ENCODE measurements at regions of chr2 and their contacts with region 1.

Region 1: DNA sequence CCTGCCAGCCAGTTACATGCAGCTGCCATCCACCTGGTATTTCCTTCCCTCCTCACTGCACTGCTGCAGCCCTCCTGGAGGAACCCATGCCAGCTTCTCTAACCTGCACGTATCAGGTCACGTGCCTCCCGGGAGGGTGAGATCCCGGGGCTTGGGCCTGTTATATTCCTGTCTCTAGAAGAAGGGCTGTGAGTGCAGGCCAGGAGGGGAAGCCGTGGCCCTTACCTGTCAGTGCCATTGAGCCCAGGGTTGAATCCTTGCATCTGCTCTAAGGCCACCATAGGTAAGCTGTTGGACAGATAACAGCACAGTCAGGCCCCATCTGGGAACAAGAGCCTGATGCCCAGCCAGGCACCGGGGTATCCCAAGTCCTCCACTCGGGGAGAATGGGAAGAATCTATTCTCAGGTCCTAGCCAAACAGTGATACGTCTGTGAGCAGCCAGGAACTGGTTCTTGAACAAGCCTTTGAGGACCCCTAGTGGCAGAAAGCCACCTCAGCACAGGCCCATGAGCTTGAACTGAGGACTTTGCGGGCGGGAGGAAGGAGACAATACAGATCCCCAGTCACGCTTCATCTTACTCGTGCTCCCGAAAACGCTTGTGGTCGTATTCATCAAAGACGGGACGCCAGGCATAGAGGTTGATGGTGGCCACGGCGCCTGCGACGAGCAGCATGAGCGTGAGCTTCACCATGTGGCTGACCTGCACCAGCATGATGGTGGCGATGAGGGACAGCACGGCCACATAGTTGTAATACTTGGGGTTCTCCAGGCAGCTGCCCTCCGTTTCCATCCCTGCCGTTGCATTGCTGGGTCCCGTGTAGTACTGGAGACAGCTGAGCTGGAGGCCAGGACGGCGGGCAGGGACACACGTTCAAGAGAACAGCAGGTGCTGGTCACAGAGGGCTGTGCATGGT is 34.4 kb downstream of the CENPO start:
- DNase-seq: peak; percentile 94
- H3K4me3 ChIP-seq: peak overlapping the region in 1 of 2 experiments; percentile 22; a peak in 1 of 4 replicates
- H3K27ac ChIP-seq: no peak overlapping the region
- H3K4me1 ChIP-seq: peaks cover 7 to 11% of the 10 kb centered on the region in 2 experiments; a peak in 1 of 4 replicates
- H3K27me3 ChIP-seq: no peaks in the 10 kb centered on the region
- CTCF ChIP-seq: peak; percentile 98
- EP300 ChIP-seq: no peak
- RAD21 ChIP-seq: peak; percentile 99

Region 2: DNA sequence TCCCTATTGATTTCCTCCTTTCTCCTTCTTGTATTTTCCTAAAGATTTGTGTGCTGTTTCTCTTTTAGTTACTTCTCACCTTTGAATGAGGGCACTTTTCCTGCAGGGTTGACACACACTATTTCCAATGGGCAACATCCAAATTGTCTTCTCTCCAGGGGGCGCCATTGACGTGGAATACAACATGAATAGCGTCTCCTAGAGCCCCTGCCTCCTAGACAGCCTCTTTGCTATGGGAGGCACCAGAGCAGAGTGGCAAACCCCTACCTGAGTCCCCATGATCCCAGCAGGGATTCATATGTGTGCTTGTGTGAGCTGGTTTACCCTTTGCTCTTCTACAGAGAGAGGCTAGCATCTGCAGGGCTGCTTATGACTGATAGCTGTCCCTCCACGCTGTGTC is 405.9 kb before region 1 on chr2:
- CTCF ChIA-PET with region 1: interaction called, 123 read pairs
- POLR2A ChIA-PET with region 1: no interaction called
- DNase-seq: peak; percentile 60
- H3K4me3 ChIP-seq: no peak overlapping the region
- H3K27ac ChIP-seq: no peak overlapping the region
- H3K4me1 ChIP-seq: peaks cover 0 to 2% of the 10 kb centered on the region in 2 experiments; a peak in 1 of 4 replicates
- H3K27me3 ChIP-seq: no peaks in the 10 kb centered on the region
- CTCF ChIP-seq: peak; percentile 58
- EP300 ChIP-seq: no peak
- RAD21 ChIP-seq: peak; percentile 88

Region 3: DNA sequence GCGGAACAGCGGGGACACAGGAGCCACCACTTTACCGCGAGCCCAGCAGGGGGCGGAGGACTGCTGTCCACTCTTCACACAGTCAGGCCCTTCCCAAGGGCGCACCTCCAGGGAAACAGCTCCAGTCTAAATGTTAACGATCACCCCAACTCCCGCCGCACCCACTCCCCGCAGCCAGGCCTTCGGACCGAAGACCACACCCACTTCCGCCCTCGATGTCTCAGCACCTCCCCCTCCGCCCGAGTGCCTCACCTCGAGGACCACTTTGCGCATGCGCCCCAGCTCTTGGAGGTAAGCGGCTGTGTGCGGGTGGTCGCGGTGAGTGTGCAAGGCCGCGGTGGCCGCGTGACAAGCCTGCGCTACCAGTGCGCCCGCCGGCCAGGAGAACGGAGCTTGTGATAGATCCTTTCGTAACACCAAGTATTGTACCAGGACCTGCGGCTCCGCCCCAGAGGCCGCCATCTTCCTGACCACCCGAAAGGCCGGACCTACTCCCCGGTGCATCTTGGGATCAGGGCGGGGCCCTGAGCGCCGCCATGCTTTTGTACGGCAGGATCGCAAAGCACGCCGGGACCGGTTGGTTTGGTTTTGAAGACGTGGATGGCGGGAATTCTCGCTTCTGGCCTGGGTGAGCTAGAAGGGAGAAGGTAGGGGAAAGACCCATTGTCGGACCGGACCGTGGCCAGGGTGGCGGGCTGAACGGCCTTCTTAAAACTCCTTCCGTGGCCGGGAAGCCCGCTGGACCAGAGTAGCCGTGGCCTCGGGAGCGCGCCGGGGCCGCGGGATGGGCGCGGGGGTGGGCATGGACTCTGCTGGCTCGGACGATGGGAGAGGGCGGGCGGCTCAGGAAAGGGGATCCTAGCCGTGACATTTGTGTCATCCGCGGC is 34.5 kb before region 1 on chr2 and contains the starts of genes CENPO and PTRHD1:
- CTCF ChIA-PET with region 1: interaction called, 31 read pairs
- POLR2A ChIA-PET with region 1: interaction called, 7 read pairs
- DNase-seq: peak; percentile 99
- H3K4me3 ChIP-seq: peak within 1 kb of the TSS; percentile 89 to 93
- H3K27ac ChIP-seq: peak within 1 kb of the TSS; percentile 94 to 100
- H3K4me1 ChIP-seq: peaks cover 18 to 19% of the 10 kb centered on the region in 2 experiments; a peak in 3 of 4 replicates
- H3K27me3 ChIP-seq: no peaks in the 10 kb centered on the region
- CTCF ChIP-seq: peak; percentile 70
- EP300 ChIP-seq: no peak; a peak in 2 of 4 replicates
- RAD21 ChIP-seq: peak; percentile 59
- polyA plus RNA-seq, gene CENPO: 18.3 and 22.5 TPM in 2 replicates
- polyA plus RNA-seq, gene PTRHD1: 65.6 and 74.4 TPM in 2 replicates

Region 4: GRCh38 chr2:24855726-24856125 is 28.1 kb after region 1 on chr2:
- CTCF ChIA-PET with region 1: interaction called, 25 read pairs
- POLR2A ChIA-PET with region 1: no interaction called
- DNase-seq: no peak
- H3K4me3 ChIP-seq: no peak overlapping the region
- H3K27ac ChIP-seq: peak overlapping the region in 1 of 2 experiments; percentile 44; a peak in 3 of 4 replicates
- H3K4me1 ChIP-seq: peaks cover 8 to 10% of the 10 kb centered on the region in 2 experiments; a peak in 2 of 4 replicates
- H3K27me3 ChIP-seq: no peaks in the 10 kb centered on the region
- CTCF ChIP-seq: no peak
- EP300 ChIP-seq: no peak
- RAD21 ChIP-seq: no peak

Region 5: DNA sequence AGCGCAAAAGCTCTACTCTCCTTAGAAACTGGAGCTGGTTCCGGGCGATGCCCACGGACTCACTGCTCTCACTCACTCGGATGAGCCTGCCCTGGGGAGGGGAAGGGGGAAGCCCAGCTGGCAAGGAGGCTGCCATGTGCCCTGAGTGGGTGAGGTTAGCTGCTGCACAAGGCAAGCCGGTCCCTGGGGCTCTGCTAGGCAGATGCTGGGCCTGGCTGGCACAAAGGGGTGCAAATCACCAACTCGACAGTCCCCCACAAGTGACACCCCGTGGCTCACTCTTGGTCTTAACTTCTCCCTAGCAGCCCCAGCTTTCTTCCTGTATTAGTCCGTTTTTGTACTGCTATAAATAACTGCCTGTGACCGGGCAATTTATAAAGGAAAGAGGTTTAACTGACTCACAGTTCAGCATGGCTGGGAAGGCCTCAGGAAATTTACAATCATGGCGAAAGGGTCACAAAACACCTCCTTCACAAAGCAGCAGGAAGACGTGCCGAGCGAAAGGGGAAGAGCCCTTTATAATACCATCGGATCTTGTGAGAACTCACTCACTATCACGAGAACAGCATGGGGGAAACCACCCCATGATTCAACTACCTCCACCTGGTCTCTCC is 59.2 kb after region 1 on chr2:
- CTCF ChIA-PET with region 1: no interaction called
- POLR2A ChIA-PET with region 1: no interaction called
- DNase-seq: no peak
- H3K4me3 ChIP-seq: no peak overlapping the region
- H3K27ac ChIP-seq: no peak overlapping the region
- H3K4me1 ChIP-seq: no peaks in the 10 kb centered on the region; a peak in 1 of 4 replicates
- H3K27me3 ChIP-seq: no peaks in the 10 kb centered on the region
- CTCF ChIP-seq: no peak
- EP300 ChIP-seq: no peak
- RAD21 ChIP-seq: no peak

Region 6: DNA sequence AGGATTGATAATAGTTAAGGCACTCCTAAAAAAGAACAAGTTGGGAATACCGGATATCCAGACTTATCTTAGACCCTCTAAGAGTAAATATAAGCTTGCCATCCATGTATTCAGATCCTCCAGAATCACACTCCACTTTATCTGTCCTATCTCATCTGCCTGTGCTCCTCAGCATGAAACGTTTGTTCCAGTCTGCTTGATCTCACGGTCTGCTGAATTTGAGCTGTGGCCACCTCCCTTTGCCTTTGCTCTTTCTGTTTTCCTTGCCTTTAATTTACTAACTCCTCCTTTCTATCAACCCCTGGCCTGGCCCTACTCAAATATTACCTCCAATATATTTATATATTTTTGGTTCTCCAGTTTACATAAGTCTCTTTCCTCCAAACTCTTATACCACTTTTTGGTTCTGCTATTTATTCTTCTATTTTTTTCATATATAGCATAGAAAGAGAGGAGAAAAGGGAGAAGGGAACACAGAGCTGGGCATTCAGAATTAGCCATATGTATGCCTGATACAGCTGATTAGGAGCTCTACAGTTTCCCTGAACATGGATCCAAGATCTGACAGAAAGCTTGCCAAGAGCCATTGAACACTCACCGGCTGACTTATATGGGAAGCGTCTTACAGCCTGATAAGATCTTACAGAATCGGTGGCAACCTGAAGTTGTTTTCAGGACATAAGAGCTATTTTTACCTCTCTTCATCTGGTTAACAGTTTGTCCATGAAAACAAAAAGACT is 166.0 kb after region 1 on chr2:
- CTCF ChIA-PET with region 1: no interaction called
- POLR2A ChIA-PET with region 1: no interaction called
- DNase-seq: no peak
- H3K4me3 ChIP-seq: no peak overlapping the region
- H3K27ac ChIP-seq: no peak overlapping the region
- H3K4me1 ChIP-seq: peaks cover 2 to 9% of the 10 kb centered on the region in 2 experiments; a peak in 2 of 4 replicates
- H3K27me3 ChIP-seq: no peaks in the 10 kb centered on the region
- CTCF ChIP-seq: no peak
- EP300 ChIP-seq: no peak
- RAD21 ChIP-seq: no peak

Region 7: GRCh38 chr2:25684577-25685473 is 857.2 kb after region 1 on chr2:
- CTCF ChIA-PET with region 1: no interaction called
- POLR2A ChIA-PET with region 1: no interaction called
- DNase-seq: no peak
- H3K4me3 ChIP-seq: no peak overlapping the region
- H3K27ac ChIP-seq: no peak overlapping the region
- H3K4me1 ChIP-seq: no peaks in the 10 kb centered on the region; a peak in 1 of 4 replicates
- H3K27me3 ChIP-seq: no peaks in the 10 kb centered on the region
- CTCF ChIP-seq: no peak
- EP300 ChIP-seq: no peak
- RAD21 ChIP-seq: no peak

Measured in SK-N-SH (cell line).